ENCODE measurements at regions of chr9 and their contacts with region 1.

Region 1: DNA sequence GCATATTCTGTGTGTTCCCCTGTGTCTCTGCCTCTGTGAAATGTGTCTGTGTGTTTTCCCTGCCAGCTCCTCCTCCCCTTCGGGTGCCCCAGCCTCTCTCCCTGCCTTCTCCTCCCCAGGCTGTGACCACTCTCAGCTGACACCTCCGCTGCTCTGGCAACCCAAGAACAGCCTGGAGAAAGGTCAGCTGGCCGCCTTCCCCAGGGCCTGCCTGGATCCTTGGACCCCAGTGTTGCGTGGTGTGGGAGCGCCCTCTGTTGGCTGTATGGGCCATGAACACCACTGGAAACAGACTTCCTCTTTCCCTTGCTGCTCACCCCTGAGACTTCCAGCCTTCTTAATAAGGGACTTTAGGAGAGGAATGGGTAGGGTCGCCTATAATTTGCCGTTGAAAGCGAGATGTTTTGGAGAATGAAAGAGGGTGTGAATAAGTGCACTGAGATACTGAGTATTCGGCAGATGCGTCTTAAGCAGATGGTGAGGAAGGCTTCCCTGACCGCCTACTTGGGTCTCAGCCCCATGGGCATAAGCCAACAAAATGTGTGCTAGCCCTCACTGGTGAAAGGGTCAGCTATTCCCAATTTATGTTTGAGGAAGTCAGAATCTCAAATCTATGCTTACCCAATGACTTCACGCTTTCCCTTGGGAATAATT is 114.9 kb upstream of the TRIM32 start:
- DNase-seq: peak; percentile 86 to 95 (median 92)
- ATAC-seq: peak; percentile 94 to 99 (median 97)
- H3K4me3 ChIP-seq: no peak overlapping the region
- H3K27ac ChIP-seq: peak overlapping the region in 1 of 12 donors; percentile 22
- H3K4me1 ChIP-seq: peaks cover 0 to 42% (median 23%) of the 10 kb centered on the region in 12 donors
- H3K27me3 ChIP-seq: no peaks in the 10 kb centered on the region
- CTCF ChIP-seq: peak; percentile 71 to 90 (median 84)
- POLR2A ChIP-seq: no peak

Region 2: DNA sequence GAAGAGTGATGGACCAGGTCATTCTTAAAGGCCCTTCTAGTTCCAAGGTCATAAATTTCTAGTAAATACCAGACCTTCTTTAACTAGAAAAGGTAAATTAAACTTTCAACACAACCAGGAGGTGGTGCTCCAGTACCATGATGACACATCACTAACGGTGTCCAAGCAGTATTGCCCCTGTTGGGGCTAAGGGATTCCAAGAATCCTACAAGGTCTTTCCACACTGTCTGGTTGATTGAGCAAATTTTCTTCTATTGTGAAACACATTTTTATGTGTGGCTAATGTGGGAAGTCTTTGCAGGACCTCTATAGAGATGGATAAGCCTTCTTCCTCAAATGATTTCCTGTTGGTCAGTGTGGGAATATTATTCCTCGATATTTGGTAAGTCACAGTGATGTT is 878.2 kb before region 1 on chr9:
- intact Hi-C with region 1: loop called in 1 of 10 experiments (anchors 10 kb)
- DNase-seq: no peak
- ATAC-seq: peak in 2 of 4 donors; percentile 77 to 79
- H3K4me3 ChIP-seq: no peak overlapping the region
- H3K27ac ChIP-seq: no peak overlapping the region
- H3K4me1 ChIP-seq: no peaks in the 10 kb centered on the region
- H3K27me3 ChIP-seq: no peaks in the 10 kb centered on the region
- CTCF ChIP-seq: peak in 8 of 12 donors; percentile 11 to 43 (median 24)
- POLR2A ChIP-seq: no peak

Region 3: GRCh38 chr9:115944166-115944948 is 627.9 kb before region 1 on chr9:
- intact Hi-C with region 1: loop called in 1 of 10 experiments (anchors 5 kb)
- DNase-seq: peak; percentile 53 to 91 (median 69)
- ATAC-seq: peak; percentile 93 to 97 (median 96)
- H3K4me3 ChIP-seq: no peak overlapping the region
- H3K27ac ChIP-seq: peak overlapping the region; percentile 63 to 91 (median 80)
- H3K4me1 ChIP-seq: peaks cover 0 to 29% (median 17%) of the 10 kb centered on the region in 12 donors
- H3K27me3 ChIP-seq: no peaks in the 10 kb centered on the region
- CTCF ChIP-seq: no peak
- POLR2A ChIP-seq: no peak

Region 4: GRCh38 chr9:116149844-116150243 is 422.4 kb before region 1 on chr9:
- intact Hi-C with region 1: loop called in 7 of 10 experiments (anchors 1 to 5 kb)
- DNase-seq: no peak
- ATAC-seq: peak in 1 of 4 donors; percentile 47
- H3K4me3 ChIP-seq: no peak overlapping the region
- H3K27ac ChIP-seq: no peak overlapping the region
- H3K4me1 ChIP-seq: peaks cover 0 to 11% (median 0%) of the 10 kb centered on the region in 12 donors
- H3K27me3 ChIP-seq: peaks cover 0 to 29% (median 4%) of the 10 kb centered on the region in 9 donors
- CTCF ChIP-seq: peak; percentile 25 to 67 (median 55)
- POLR2A ChIP-seq: no peak

Region 5: DNA sequence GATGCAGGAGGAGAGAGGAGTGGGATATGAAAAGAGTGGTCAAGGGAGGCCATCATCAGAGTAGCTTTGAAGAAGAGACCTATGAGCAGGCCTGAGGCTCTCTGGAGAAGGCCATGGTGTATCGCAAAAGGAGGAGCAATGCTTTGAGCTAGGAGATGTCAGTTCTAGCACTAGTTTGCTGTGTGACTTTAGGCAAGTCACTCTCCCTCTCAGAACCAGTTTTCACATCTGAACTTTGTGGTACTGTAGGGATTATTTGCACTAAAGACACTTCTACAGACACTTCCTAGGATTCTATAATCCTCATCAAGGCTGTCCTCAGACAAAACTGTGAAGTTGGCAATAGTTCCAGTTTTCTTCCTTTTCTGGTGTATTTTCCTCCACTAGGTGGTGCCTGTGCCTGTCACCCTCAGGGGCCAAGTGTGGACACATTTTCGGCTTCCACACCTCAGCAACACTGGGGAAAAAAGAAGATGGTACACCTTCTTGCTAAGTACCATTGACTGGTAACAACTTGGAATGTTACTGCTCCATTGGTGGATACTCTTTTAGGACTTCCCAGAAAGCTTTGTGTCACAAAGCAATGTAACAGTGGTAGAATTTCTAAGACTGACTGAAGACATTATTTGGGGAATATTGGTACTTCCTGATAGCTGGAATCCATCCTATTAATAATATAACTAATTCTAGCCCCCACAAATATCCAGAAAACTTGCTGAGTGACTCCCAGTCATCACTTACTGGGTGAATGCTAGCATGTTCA is 408.7 kb before region 1 on chr9:
- intact Hi-C with region 1: loop called in 3 of 10 experiments (anchors 5 kb)
- DNase-seq: no peak
- ATAC-seq: peak in 1 of 4 donors; percentile 41
- H3K4me3 ChIP-seq: no peak overlapping the region
- H3K27ac ChIP-seq: no peak overlapping the region
- H3K4me1 ChIP-seq: peaks cover 0 to 15% (median 0%) of the 10 kb centered on the region in 12 donors
- H3K27me3 ChIP-seq: no peaks in the 10 kb centered on the region
- CTCF ChIP-seq: peak; percentile 17 to 56 (median 34)
- POLR2A ChIP-seq: no peak

Region 6: DNA sequence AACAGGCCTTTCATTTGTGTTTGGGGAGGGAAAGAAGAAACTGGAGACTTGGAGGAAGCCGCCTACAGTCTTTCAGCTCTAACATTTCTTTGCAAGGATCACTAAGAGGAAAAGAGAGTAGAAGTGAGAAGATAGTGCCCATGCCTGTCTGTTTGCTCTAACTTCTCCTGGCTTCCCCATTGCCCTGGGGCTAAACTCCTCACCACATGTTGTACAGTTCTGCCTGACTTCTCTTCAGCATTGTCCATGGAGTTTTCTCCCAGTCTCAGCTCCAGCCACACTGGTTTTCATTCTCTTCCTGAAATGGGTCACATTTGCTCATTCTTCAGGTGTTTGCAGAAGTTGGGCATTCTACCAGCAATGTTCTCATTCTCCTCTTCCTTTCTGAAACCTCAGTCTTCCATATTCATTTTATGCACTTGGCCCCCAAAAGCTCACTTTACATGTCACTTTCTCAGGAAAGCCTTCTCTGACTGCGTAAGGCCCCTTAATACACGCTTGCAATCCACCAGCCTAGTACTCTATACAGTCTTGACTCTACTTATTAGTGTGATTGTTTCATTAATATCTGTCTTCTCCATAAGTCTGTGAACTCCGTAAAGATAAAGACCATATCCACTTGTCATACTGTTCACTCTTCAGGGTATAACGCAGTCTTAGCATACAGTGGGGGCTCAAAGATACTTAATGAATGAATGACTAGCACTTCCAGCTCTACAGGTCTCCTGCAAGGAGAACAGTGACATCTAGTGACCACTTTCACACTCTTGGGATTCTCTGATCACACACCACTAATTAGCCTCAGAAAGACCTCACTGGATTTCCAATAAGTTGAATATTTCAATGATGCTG is 74.7 kb after region 1 on chr9:
- intact Hi-C with region 1: loop called in 8 of 10 experiments (anchors 5 to 10 kb)
- DNase-seq: no peak
- ATAC-seq: peak; percentile 62 to 87 (median 82)
- H3K4me3 ChIP-seq: no peak overlapping the region
- H3K27ac ChIP-seq: peak overlapping the region in 1 of 12 donors; percentile 66
- H3K4me1 ChIP-seq: peaks cover 0 to 39% (median 7%) of the 10 kb centered on the region in 12 donors
- H3K27me3 ChIP-seq: no peaks in the 10 kb centered on the region
- CTCF ChIP-seq: peak; percentile 35 to 69 (median 58)
- POLR2A ChIP-seq: no peak

Region 7: GRCh38 chr9:117233016-117233415 is 660.8 kb after region 1 on chr9:
- intact Hi-C with region 1: no loop called
- DNase-seq: no peak
- ATAC-seq: no peak
- H3K4me3 ChIP-seq: no peak overlapping the region
- H3K27ac ChIP-seq: no peak overlapping the region
- H3K4me1 ChIP-seq: no peaks in the 10 kb centered on the region
- H3K27me3 ChIP-seq: peaks cover 0 to 5% (median 0%) of the 10 kb centered on the region in 9 donors
- CTCF ChIP-seq: no peak
- POLR2A ChIP-seq: no peak

Measured in heart left ventricle (tissue), 16 donors.